Activated naive CD4-positive, alpha-beta T cell treated with anti-CD3 and anti-CD28 coated beads for 36 hours (primary cell): ENCODE measurements at regions of chr9 and their contacts with region 1.

Region 1: DNA sequence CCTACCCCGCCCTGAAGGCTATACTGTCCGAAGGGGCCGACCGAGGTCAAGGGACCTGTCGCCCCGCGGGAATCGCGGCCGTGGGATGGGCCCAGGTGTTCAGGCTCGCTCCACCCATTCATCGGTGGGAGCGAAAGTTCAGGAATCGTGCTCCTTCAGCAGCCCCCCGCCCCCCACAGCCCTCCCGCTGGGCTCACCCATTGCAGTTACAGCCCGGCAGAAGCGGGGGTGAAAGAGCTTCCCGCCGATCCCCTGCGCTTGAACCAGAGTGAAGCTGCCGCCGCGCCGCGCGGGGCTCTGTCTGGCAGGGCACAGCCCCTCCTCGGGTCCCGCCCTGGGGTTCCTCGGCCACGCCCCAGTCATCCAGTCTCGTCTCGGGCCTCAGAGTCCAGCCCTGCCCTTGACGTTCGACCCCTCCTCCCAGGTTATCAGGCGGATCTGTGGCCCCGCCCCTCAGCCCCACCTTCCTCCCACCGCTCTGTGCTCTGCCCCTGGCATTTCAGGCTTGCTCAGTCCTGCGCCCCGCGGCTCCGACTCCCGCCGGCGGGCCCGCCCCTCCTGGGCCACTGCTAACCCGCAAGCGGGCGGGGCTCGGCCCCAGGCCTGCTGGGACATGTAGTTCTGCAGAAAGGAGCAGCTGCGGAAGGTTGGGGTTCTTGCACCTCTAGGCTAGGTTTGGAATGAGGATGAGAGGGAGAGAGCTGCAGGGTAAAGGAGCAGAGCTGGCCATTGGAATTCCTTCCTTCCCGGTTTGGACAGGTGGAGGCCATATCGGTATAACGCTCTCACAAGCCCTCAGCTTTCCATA is at the start of gene MYORG:
- DNase-seq: peak; percentile 97
- H3K4me3 Mint-ChIP-seq: peak within 1 kb of the TSS; percentile 80
- H3K27ac Mint-ChIP-seq: no peak within 1 kb of the TSS
- H3K4me1 Mint-ChIP-seq: peaks cover 30% of the 10 kb centered on the region
- H3K27me3 Mint-ChIP-seq: no peaks in the 10 kb centered on the region
- total RNA-seq, gene MYORG: 1.1 to 2.0 TPM

Region 2: GRCh38 chr9:34048923-34049697 is 327.7 kb before region 1 on chr9:
- CTCF ChIA-PET with region 1: interaction called, 3 read pairs
- intact Hi-C with region 1: loop called (anchors 1 kb)
- DNase-seq: peak; percentile 98
- H3K4me3 Mint-ChIP-seq: peak overlapping the region; percentile 91
- H3K27ac Mint-ChIP-seq: peak overlapping the region; percentile 98
- H3K4me1 Mint-ChIP-seq: peaks cover 33% of the 10 kb centered on the region
- H3K27me3 Mint-ChIP-seq: no peaks in the 10 kb centered on the region

Region 3: GRCh38 chr9:34126207-34127034 is 250.4 kb before region 1 on chr9 and contains the start of gene DCAF12:
- CTCF ChIA-PET with region 1: no interaction called
- intact Hi-C with region 1: loop called (anchors 1 kb)
- DNase-seq: peak; percentile 94
- H3K4me3 Mint-ChIP-seq: peak within 1 kb of the TSS; percentile 93
- H3K27ac Mint-ChIP-seq: peak within 1 kb of the TSS; percentile 93
- H3K4me1 Mint-ChIP-seq: peaks cover 35% of the 10 kb centered on the region
- H3K27me3 Mint-ChIP-seq: no peaks in the 10 kb centered on the region
- total RNA-seq, gene DCAF12: 34.0 to 37.0 TPM

Region 4: DNA sequence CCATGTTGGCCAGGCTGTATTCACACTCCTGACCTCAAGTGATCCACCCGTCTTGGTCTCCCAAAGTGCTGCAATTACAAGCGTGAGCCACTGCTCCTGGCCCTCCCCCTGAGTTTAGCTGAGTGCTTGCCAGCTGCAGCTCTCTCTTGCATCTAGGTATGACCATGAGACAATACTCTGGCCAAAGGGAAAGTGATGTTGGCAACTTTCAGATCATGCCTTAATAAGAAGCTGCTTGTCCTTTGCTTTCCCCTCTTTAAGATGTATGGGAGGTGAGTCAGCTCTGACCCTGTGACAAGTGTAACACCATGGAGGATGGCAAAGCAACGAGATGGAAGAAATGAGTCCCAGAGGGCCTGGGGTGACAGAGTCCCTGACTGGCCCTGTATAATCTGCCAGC is 231.6 kb before region 1 on chr9:
- CTCF ChIA-PET with region 1: no interaction called
- intact Hi-C with region 1: no loop called
- DNase-seq: no peak
- H3K4me3 Mint-ChIP-seq: no peak overlapping the region
- H3K27ac Mint-ChIP-seq: no peak overlapping the region
- H3K4me1 Mint-ChIP-seq: no peaks in the 10 kb centered on the region
- H3K27me3 Mint-ChIP-seq: no peaks in the 10 kb centered on the region

Region 5: GRCh38 chr9:34252670-34253459 is 123.9 kb before region 1 on chr9:
- CTCF ChIA-PET with region 1: interaction called, 6 read pairs
- intact Hi-C with region 1: loop called (anchors 1 kb)
- DNase-seq: peak; percentile 80
- H3K4me3 Mint-ChIP-seq: no peak overlapping the region
- H3K27ac Mint-ChIP-seq: peak overlapping the region; percentile 36
- H3K4me1 Mint-ChIP-seq: peaks cover 16% of the 10 kb centered on the region
- H3K27me3 Mint-ChIP-seq: no peaks in the 10 kb centered on the region

Region 6: GRCh38 chr9:34430843-34431437 is 54.1 kb after region 1 on chr9:
- CTCF ChIA-PET with region 1: no interaction called
- intact Hi-C with region 1: no loop called
- DNase-seq: peak; percentile 46
- H3K4me3 Mint-ChIP-seq: no peak overlapping the region
- H3K27ac Mint-ChIP-seq: no peak overlapping the region
- H3K4me1 Mint-ChIP-seq: no peaks in the 10 kb centered on the region
- H3K27me3 Mint-ChIP-seq: no peaks in the 10 kb centered on the region